Left ventricle myocardium superior (tissue), 1 donor: ENCODE measurements at regions of chr19 and their contacts with region 1.

Region 1: GRCh38 chr19:52237771-52238400 is 31.5 kb upstream of the ZNF766 start:
- DNase-seq: peak; percentile 54
- ATAC-seq: peak; percentile 65

Region 2: GRCh38 chr19:52007806-52008557 is 229.9 kb before region 1 on chr19 and contains the start of gene ZNF615:
- intact Hi-C with region 1: no loop called
- DNase-seq: peak; percentile 94
- ATAC-seq: peak; percentile 99
- total RNA-seq, gene ZNF615: 12.2 TPM

Region 3: DNA sequence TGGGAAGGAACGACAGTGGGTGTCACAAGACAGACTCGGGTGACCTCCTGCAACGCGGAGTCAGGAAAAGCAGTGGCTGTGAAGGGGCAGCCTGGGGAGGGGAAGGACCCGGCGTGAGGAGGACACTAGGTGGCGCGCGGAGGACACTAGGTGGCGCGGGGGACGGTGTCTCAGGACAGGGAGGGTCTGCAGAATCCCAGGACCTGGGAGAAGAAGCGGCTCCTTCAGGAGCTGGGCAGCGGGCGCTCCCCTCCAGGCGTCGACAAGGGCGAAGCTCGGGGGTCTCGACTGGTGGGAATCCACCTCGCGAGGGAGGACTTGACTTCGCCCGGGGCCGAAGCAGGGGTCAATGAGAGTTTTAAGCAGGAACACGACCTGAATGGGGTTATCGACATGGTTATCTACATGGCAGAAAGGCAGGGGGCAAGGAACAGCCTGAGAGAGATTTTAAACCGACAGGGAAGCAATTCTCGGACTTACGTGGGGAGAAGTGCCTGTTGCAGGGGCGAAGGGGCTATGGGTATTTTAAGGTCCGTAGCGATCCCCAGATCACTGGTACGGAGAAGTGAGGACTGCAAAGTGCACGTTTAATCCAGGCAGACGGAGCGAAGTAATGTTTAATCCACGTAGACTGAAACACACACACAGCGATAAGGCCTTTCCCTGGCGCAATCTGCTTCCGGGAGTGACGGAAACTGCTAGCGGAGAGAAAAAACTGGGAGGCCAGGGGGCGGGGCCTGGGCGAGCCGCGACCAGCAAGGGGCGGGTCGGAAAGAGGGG is 98.4 kb before region 1 on chr19 and contains the start of gene ZNF616:
- intact Hi-C with region 1: loop called (anchors 2 kb)
- DNase-seq: peak; percentile 98
- ATAC-seq: peak; percentile 97
- total RNA-seq, gene ZNF616: 5.5 TPM

Region 4: GRCh38 chr19:53782698-53783097 is 1544.8 kb after region 1 on chr19:
- intact Hi-C with region 1: no loop called
- DNase-seq: no peak
- ATAC-seq: no peak